ENCODE measurements at regions of chr15 and their contacts with region 1.

Region 1: GRCh38 chr15:67863442-67863987 is 23.7 kb upstream of the RNU6-1 start:
- DNase-seq: peak; percentile 89
- H3K4me3 ChIP-seq: peak overlapping the region; percentile 62
- H3K27ac ChIP-seq: peak overlapping the region; percentile 70
- H3K4me1 ChIP-seq: peaks cover 41% of the 10 kb centered on the region
- CTCF ChIP-seq: peak; percentile 89

Region 2: GRCh38 chr15:67107014-67107812 is 756.3 kb before region 1 on chr15:
- CTCF ChIA-PET with region 1: no interaction called
- POLR2A ChIA-PET with region 1: no interaction called
- intact Hi-C with region 1: no loop called
- DNase-seq: no peak
- H3K4me3 ChIP-seq: no peak overlapping the region
- H3K27ac ChIP-seq: peak overlapping the region; percentile 31
- H3K4me1 ChIP-seq: peaks cover 90% of the 10 kb centered on the region
- CTCF ChIP-seq: no peak

Region 3: DNA sequence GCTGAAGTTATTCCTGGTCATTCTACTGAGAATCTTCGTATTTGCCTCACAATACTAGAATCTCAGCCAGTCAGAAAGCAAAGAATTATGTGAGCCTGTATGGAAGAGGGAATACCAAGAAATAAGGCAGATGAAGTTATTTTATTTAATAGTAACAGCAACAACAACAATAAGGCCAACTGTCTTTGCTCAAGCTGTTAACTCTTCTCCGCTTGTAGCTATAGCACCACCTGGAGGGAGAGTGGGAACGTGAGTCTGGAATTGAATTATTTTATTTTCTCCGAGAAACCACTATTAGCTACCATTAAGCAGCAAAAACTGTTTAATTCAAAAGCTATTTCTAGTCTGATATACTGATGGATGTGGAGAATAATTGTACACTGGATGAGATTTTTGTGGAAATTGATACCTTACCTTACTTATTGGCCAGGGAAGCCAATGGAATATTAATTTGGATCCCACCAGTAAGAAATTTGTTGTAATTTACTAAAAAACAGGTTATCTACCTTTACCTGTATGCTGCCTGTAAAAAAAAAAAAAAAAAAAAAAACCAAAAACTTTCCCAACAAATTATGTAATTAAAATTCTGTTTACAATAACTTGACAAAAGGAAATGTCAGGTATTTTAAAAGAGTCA is 291.5 kb after region 1 on chr15:
- CTCF ChIA-PET with region 1: interaction called, 5 read pairs
- POLR2A ChIA-PET with region 1: no interaction called
- intact Hi-C with region 1: loop called (anchors 1 kb)
- DNase-seq: peak; percentile 72
- H3K4me3 ChIP-seq: no peak overlapping the region
- H3K27ac ChIP-seq: peak overlapping the region; percentile 16
- H3K4me1 ChIP-seq: peaks cover 8% of the 10 kb centered on the region
- CTCF ChIP-seq: peak; percentile 96

Region 4: GRCh38 chr15:68187559-68187958 is 324.0 kb after region 1 on chr15:
- CTCF ChIA-PET with region 1: interaction called, 3 read pairs
- POLR2A ChIA-PET with region 1: no interaction called
- intact Hi-C with region 1: loop called (anchors 1 kb)
- DNase-seq: peak; percentile 49
- H3K4me3 ChIP-seq: no peak overlapping the region
- H3K27ac ChIP-seq: peak overlapping the region; percentile 97
- H3K4me1 ChIP-seq: peaks cover 70% of the 10 kb centered on the region
- CTCF ChIP-seq: no peak

Region 5: DNA sequence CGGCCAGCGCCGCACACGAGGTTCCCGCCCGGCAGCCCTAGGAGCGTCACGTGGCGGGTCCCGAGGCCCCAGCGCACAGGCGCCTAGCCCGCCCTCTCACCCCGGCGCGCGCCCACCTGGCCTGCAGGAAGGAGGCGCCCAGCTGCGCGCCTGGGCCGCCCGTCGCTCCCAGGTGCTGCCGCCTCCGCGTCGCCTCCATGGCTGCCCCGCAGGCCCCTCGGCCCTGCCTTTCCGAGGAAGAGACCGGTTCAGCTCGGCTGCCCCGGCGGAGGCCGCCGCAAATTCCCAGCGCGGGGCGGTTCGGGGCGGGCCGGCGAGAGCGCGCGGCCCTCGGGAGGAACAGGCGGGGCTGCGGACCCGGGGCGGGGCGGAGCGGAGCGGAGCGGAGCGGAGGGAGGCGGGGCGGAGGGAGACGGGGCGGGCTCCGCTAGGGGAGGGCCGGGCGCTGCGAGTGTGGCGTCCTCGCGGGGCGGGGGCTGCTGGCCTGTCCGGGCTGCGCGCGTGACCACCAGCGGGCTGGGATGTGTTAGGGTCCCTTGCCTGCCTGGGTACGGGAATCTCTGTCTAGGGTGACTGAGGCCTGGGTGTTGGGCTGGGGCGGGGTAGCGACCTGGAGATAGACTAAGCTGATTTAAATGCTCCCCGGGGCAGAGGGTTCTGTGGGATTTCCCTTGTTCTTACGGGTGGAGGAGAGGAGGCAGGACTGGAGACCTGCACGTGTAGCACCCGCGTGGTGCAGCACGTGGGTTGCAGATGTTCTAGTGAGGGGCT is 366.1 kb after region 1 on chr15 and contains the start of gene CLN6:
- CTCF ChIA-PET with region 1: no interaction called
- POLR2A ChIA-PET with region 1: no interaction called
- intact Hi-C with region 1: loop called (anchors 2 kb)
- DNase-seq: peak; percentile 92
- H3K4me3 ChIP-seq: peak within 1 kb of the TSS; percentile 80
- H3K27ac ChIP-seq: peak within 1 kb of the TSS; percentile 80
- H3K4me1 ChIP-seq: peaks cover 49% of the 10 kb centered on the region
- CTCF ChIP-seq: no peak; the same call in 1 of the 2 replicates
- total RNA-seq, gene CLN6: 50.3 and 60.2 TPM in 2 replicates